Activated CD4-positive, alpha-beta T cell treated with anti-CD3 and anti-CD28 coated beads for 36 hours (primary cell): ENCODE measurements at regions of chr18 and their contacts with region 1.

Region 1: DNA sequence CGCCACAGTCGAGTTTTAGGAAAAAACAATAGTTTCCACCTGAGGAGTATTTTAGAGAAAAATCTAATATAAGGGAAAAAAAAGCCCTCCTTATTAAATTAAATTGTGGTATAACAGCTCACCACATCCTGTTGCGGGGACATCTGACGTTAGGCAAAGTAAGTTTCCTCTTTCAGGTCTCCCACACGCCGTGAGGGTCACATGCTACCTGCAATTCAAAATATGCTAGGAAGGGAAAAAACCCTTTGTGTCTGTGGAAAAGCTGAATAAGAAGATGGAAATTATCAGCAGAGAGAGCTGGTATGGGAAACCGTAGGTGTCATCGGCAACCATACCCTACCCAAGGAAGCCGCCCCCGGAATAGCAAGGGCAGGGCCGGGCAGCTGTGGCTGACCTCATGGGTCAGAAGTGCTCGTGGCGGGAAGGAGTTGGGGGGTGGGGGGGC is 128.0 kb downstream of the NFATC1 start:
- DNase-seq: peak; percentile 90
- ATAC-seq: peak; percentile 49
- H3K4me3 Mint-ChIP-seq: peak overlapping the region; percentile 74
- H3K27ac Mint-ChIP-seq: peak overlapping the region; percentile 94
- H3K4me1 Mint-ChIP-seq: peaks cover 89% of the 10 kb centered on the region
- H3K27me3 Mint-ChIP-seq: no peaks in the 10 kb centered on the region

Region 2: DNA sequence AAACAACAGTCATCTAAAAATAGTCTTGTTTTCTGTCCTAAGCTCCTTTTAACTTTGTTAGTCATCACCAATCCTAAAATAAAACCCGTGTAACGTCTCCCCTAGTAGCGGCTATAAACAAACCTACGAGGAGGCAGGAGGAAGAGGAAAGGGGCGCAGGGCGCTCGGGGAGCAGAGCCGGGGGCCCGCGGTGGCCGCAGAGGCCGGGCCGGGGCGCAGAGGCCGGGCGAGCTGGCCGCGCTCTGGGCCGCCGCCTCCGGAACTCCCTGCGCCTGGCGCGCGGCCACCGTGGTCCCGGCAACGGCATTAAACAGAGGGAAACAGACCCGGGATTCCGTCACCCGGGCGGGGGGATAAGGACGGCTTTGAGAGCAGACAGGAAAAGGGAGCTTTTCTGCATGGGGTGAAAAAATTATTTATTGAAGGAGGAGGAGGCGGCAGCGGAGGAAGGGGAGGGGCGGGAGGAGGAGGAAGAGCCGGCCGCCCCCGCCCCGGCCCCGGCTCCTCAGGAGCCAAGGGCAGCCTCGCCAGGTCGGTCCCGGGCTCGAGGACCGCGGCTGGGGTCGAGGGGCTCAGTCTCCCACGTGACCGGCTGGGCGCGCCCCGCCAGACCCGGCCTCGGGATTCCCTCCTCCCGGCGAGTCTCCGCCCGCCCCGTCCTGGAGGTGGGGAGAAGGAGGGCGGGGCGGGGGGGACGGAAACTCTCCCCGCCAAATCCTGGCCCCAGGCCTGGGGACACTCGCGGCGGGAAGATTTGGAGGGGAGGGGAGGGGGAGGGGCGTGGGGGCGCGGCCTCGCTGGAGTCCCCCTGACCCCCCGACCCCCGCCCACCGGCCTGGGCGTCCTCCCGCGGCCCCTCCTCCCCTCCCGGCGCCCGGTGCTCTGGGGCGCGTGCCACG is 129.9 kb before region 1 on chr18:
- CTCF ChIA-PET with region 1: interaction called, 10 read pairs
- POLR2A ChIA-PET with region 1: interaction called, 44 read pairs
- intact Hi-C with region 1: loop called (anchors 1 kb)
- DNase-seq: peak; percentile 69
- ATAC-seq: peak; percentile 8
- H3K4me3 Mint-ChIP-seq: peak overlapping the region; percentile 73
- H3K27ac Mint-ChIP-seq: peak overlapping the region; percentile 78
- H3K4me1 Mint-ChIP-seq: peaks cover 16% of the 10 kb centered on the region
- H3K27me3 Mint-ChIP-seq: peaks cover 10% of the 10 kb centered on the region

Region 3: DNA sequence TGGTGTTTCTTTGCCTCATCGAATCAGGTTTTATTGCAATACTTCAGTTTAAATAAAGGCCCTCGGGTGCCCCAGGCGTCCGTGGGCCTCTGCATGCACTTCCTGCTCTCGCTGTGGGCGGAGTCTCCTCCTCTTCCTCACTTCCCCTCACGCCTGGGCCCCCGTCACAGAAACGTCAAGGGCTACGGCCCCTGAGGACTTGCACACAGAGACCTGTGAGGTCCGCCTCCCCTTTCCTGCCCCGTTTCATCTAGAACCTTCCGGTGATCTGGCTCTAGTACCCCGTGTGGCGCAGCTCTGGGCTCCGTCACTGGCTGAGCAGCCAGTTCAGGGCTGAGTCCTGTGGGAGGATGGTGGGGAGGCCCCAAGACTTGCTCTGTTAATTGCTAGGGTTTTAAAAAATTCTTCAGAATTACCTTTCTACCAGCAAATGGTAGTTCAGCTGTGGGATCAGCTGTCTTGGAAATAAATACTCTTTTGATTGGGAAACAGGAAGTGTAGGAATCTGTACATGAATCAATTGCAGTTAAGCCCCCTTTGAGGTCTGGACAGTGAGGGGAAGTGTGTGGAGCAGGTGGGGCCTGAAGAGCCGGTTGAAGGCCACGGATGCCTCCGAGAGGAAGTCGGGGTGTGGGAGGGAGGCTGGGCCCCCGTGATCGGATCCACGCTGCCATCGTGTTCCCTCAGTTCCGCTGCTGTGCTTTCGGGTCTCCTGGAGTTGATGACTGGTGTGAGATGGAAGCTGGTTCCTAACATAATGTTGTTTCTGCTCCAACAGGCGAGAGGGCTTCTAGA is 117.8 kb before region 1 on chr18:
- CTCF ChIA-PET with region 1: interaction called, 18 read pairs
- POLR2A ChIA-PET with region 1: interaction called, 13 read pairs
- intact Hi-C with region 1: loop called (anchors 2 kb)
- DNase-seq: peak; percentile 94
- ATAC-seq: peak; percentile 86
- H3K4me3 Mint-ChIP-seq: peak overlapping the region; percentile 83
- H3K27ac Mint-ChIP-seq: peak overlapping the region; percentile 96
- H3K4me1 Mint-ChIP-seq: peaks cover 65% of the 10 kb centered on the region
- H3K27me3 Mint-ChIP-seq: no peaks in the 10 kb centered on the region

Region 4: DNA sequence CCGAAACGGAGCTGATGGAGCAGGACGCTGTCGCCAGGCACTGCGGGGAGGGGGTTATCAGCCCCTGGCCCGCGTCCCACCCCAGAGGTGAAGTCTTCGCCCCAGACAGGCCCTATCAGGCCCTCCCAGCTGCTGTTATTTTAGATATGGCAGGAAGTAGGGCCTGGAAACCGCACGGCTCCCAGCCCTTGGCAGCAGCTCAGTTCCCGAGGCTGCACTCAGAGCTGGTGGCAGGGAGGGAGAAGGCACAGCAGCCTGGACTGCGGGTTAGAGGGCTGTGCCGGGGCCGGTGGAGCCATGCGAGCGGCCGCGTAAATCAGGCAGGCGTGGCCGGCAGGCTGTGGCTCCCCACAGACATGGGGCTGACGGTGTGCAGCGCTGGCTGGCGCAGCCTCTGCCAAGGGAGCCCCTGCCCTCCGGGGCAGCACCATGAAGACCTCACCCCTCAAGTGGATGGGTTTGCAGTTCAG is 16.6 kb before region 1 on chr18:
- CTCF ChIA-PET with region 1: interaction called, 10 read pairs
- POLR2A ChIA-PET with region 1: interaction called, 14 read pairs
- intact Hi-C with region 1: loop called (anchors 1 to 2 kb)
- DNase-seq: peak; percentile 51
- ATAC-seq: peak; percentile 38
- H3K4me3 Mint-ChIP-seq: peak overlapping the region; percentile 60
- H3K27ac Mint-ChIP-seq: peak overlapping the region; percentile 88
- H3K4me1 Mint-ChIP-seq: peaks cover 61% of the 10 kb centered on the region
- H3K27me3 Mint-ChIP-seq: no peaks in the 10 kb centered on the region

Region 5: DNA sequence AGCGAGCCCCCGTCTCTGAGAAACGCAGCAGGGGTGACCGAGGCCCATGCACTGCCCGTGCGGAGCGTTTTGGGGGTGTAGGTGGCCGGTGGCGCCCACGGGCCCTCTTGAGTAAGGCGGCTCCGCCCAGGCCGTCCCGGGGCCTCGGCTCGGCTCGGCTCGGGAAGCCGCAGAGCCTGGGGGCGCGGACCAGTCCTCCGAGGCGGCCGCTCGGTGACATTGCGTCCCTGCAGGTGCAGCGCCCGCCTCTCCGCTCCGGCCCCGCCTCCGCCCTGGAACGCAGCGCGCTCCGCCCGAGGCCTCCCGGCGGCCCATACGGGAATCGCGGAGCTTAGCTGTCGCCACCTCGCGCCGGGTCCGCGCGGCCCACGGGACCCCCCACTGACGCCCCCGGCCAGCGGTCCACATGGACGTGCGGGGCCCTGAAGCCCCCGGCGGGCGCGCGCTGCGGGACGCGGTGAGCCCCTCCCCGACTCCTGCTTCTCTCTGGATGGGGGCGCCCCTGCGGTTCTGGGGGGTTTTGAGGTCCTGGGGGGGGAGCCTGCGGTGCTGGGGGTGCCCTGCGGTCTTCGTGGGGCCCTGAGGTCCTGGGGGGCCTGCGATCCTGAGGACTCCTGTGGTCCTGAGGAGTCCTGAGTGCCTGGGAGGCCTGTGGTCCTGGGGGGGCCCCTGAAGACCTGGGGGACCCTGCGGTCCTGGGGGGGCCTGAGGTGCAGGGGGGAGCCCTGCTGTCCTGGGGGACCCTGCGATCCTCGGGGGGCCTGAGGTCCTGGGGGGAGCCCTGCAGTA is 440.8 kb after region 1 on chr18 and contains the start of gene HSBP1L1:
- CTCF ChIA-PET with region 1: no interaction called
- POLR2A ChIA-PET with region 1: no interaction called
- intact Hi-C with region 1: loop called in 1 of 2 experiments (anchors 5 kb)
- DNase-seq: peak; percentile 83
- ATAC-seq: peak; percentile 79
- H3K4me3 Mint-ChIP-seq: peak within 1 kb of the TSS; percentile 71
- H3K27ac Mint-ChIP-seq: peak within 1 kb of the TSS; percentile 80
- H3K4me1 Mint-ChIP-seq: peaks cover 41% of the 10 kb centered on the region
- H3K27me3 Mint-ChIP-seq: peaks cover 2% of the 10 kb centered on the region
- total RNA-seq, gene HSBP1L1: 14.4 to 16.9 TPM

Region 6: DNA sequence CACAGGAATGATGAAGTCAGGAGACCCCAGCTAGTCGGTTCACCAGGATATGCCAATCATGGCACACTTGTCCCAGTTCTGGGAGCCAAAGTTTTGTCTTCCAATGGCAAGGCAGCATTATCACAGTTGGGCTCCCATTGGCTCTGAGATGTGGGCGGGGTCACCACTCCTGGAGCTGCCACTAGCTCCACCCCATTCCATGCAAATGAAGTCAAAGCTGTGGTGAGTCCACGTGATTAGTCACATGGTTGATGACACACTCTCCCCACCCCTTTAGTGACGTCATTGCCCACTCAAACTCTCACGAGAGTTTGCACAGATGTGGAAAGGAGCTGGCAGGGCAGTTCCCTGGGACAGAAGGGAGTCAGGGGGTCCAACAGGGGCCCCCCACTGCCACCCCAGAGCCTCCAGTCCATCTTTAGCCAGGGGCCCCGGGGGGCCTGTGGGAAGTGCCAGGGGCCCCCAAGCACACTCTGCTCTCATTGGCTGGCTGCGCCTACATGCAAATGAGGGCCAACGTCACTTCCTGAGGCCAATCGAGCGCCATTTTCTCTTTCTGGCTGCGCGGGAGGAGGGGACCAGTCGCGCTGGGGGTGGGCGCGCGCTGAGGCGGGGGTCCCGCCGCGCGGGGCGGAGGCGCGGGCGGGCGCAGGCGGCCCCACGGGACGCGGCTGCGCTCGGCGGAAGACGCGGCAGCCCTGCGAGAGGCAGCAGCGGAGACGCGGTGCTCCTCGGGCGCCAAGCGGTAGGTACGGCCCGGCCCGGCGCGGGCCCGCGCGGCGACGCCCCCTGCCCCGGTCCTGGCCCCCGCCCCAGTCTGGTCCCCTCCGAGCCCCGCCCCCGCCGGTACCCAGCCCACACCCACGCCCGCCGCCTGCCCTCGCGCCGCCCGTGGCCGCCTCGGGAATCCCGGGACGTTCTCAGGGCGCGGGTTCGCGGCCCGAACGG is 585.2 kb after region 1 on chr18 and contains the start of gene ADNP2:
- CTCF ChIA-PET with region 1: no interaction called
- POLR2A ChIA-PET with region 1: no interaction called
- intact Hi-C with region 1: loop called in 1 of 2 experiments (anchors 5 kb)
- DNase-seq: peak; percentile 92
- ATAC-seq: peak; percentile 83
- H3K4me3 Mint-ChIP-seq: peak within 1 kb of the TSS; percentile 77
- H3K27ac Mint-ChIP-seq: peak within 1 kb of the TSS; percentile 86
- H3K4me1 Mint-ChIP-seq: peaks cover 48% of the 10 kb centered on the region
- H3K27me3 Mint-ChIP-seq: no peaks in the 10 kb centered on the region
- total RNA-seq, gene ADNP2: 22.8 to 25.7 TPM